ENCODE measurements at regions of chr9 and their contacts with region 1.

Region 1: DNA sequence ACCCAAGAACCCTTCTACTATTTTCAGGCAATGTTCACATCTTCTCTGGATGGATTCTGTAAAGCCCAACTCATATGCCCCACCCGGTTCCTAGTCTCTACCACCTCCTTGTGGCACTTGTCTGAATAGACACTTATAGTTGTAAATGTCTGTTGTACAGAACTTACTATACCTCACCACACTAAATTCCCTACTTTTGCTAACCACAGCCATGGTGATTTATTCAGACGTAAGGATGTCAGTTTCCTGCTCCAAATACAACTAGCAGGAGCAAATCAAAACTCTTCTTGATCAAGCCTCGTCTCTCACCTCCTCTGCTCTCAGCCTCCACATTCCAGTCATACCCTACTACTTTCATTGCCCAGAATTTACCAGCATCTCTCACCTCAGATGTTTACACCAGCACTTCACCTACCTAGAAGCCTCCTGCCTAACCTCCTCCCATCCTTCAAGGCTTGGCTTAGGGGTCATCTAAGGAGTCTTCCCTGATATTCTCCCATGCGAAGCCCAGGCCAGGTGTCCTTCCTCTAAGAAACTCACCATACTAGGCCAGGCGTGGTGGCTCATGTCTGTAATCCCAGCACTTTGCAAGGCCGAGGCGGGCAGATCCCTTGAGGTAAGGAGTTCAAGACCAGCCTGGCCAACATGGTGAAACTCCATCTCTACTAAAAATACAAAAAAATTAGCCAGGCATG is 75.5 kb downstream of the MAPKAP1 start:
- DNase-seq: peak; percentile 40
- H3K4me3 ChIP-seq: no peak overlapping the region
- H3K27ac ChIP-seq: no peak overlapping the region
- H3K4me1 ChIP-seq: peaks cover 16% of the 10 kb centered on the region
- H3K27me3 ChIP-seq: no peaks in the 10 kb centered on the region
- CTCF ChIP-seq: peak; percentile 48

Region 2: GRCh38 chr9:125296833-125297372 is 334.6 kb before region 1 on chr9:
- intact Hi-C with region 1: no loop called
- DNase-seq: peak; percentile 18
- H3K4me3 ChIP-seq: no peak overlapping the region
- H3K27ac ChIP-seq: no peak overlapping the region
- H3K4me1 ChIP-seq: no peaks in the 10 kb centered on the region
- H3K27me3 ChIP-seq: no peaks in the 10 kb centered on the region
- CTCF ChIP-seq: no peak

Region 3: DNA sequence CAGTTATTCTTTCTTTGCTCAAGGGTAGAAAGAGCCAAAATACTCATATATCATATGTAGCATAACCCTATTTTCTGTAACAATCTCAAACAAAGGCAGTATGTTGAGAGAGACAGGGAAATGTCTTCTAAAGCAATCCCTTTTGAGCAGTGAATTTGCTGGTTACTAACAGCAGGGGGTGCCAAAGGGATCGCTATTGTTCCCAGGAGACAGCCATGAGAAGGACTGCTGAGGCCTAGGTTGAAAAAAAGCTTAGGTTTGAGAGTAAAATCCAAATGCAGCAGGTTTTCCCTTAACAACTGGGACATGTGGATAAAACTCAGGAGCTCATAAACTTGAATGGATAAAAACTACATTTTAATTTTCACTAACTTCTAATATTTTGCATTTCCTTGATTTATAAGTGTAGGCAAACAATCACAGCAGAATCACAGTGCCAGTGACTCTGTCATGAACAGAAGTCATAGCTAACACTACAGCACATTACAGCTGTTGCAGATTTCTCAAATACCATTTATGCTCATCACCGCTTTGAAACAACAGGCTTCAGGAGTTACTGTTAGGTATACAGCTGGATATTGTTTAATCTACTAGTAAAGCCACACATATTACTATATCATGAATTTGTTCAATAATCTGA is 73.0 kb before region 1 on chr9:
- intact Hi-C with region 1: loop called (anchors 2 kb)
- DNase-seq: peak; percentile 76
- H3K4me3 ChIP-seq: no peak overlapping the region
- H3K27ac ChIP-seq: no peak overlapping the region
- H3K4me1 ChIP-seq: no peaks in the 10 kb centered on the region
- H3K27me3 ChIP-seq: no peaks in the 10 kb centered on the region
- CTCF ChIP-seq: peak; percentile 82

Measured in colonic mucosa (tissue), 4 donors.